HCT116 (cell line): ENCODE measurements at regions of chr11 and their contacts with region 1.

Region 1: DNA sequence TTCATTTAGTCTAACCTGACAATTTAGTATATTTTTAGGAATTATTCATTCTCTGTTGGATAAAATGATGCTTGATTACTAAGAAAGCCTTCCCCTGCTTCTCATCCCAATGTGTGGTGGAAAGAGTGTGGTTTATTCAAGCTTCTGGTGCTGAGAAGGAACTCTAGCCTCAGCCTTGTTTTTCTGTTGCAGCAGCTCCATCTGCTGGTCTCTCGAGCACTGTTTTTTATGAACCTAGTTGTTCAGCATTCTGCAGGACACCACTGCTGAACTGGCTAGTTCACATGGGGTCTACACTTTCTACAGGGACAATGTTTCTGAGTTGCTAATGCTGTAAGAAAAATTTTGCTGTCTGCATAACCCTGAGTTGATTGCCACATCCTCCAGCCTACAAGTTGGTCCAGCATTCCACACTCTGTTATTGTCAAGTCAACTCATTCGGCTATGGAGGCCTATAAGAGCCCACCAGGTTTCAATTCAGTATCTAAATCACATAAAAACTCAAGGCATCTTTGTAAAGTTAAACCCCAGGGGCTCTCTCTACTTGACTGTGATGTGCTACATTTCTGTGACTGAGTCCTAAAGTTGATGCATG is 14.3 kb downstream of the OR2AG2 start:
- DNase-seq: peak; percentile 32
- ATAC-seq: peak; percentile 89
- H3K4me3 ChIP-seq: no peak overlapping the region
- H3K27ac ChIP-seq: no peak overlapping the region
- H3K4me1 ChIP-seq: no peaks in the 10 kb centered on the region
- H3K27me3 ChIP-seq: no peaks in the 10 kb centered on the region
- CTCF ChIP-seq: peak; percentile 51 to 69 (median 61); a peak in 5 of 6 replicates
- POLR2A ChIP-seq: no peak
- RAD21 ChIP-seq: peak; percentile 60

Region 2: GRCh38 chr11:6468712-6469495 is 288.6 kb before region 1 on chr11:
- CTCF ChIA-PET with region 1: no interaction called
- POLR2A ChIA-PET with region 1: no interaction called
- RAD21 ChIA-PET with region 1: no interaction called
- intact Hi-C with region 1: no loop called
- DNase-seq: peak; percentile 60
- ATAC-seq: peak; percentile 77
- H3K4me3 ChIP-seq: no peak overlapping the region
- H3K27ac ChIP-seq: no peak overlapping the region; the same call in 1 of the 2 replicates
- H3K4me1 ChIP-seq: peaks cover 4 to 20% of the 10 kb centered on the region in 2 experiments; a peak in 3 of 4 replicates
- H3K27me3 ChIP-seq: no peaks in the 10 kb centered on the region
- CTCF ChIP-seq: no peak
- POLR2A ChIP-seq: peak; percentile 58
- RAD21 ChIP-seq: no peak

Region 3: DNA sequence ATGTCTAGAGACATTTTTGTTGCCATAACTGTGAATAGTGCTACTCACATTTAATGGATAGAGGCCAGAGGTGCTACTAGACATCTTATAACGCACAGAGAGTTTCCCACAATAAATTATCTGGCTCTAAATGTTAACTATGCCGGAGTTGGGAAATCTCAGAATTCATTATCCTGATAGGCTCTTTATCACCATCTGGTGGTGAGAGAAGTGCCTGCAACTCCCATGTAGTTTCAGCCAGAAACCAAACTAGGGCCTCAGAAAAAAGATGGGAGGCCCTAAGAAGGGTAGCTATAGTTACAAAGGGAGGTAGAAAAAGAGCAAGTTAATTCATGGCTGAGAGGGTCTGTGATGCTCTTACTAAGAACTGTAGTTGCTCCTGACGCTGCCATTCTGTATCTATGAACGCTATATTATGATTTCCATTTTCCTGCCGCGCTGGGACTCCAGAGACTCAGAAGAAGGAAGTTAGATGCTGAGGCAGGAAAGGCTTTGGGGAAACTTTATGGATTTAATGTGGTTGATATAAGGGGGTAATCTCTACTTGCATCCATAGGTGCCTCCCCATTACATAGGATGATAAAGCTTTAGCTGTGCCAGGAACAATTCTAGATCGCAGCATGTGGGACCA is 51.5 kb before region 1 on chr11:
- CTCF ChIA-PET with region 1: interaction called, 9 read pairs
- POLR2A ChIA-PET with region 1: no interaction called
- RAD21 ChIA-PET with region 1: no interaction called
- intact Hi-C with region 1: loop called (anchors 1 kb)
- DNase-seq: no peak
- ATAC-seq: peak; percentile 71
- H3K4me3 ChIP-seq: no peak overlapping the region
- H3K27ac ChIP-seq: no peak overlapping the region
- H3K4me1 ChIP-seq: no peaks in the 10 kb centered on the region
- H3K27me3 ChIP-seq: no peaks in the 10 kb centered on the region
- CTCF ChIP-seq: peak; percentile 80 to 93 (median 90)
- POLR2A ChIP-seq: no peak
- RAD21 ChIP-seq: peak; percentile 76

Region 4: DNA sequence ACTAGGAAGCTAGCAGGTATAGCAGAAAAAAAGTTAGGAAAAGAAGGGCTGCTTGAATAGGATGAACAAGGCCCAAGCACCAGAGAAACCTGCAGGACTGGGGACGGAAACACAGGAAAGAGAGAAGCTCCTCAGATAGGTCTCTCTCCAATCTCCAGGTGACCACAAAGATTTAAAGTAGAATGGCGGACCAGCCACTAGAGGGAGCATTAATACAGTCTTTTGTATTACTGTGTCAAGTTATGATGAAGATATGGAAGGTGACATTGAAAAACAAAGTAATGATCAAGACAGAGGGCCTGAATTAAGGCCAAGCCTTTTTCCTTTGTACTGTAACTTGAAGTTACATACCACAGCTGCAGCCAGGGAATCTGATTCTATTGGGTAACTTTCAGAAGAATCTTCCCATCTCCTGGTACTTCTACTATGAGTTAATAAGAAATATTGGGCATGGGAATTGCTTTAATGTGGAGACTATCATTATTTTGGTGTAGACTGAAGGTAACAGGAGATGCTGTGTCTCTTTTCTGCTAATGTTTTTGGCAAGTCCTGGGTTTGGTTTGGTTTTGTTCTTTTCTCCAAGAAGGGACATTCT is 19.5 kb before region 1 on chr11:
- CTCF ChIA-PET with region 1: interaction called, 22 read pairs
- POLR2A ChIA-PET with region 1: no interaction called
- RAD21 ChIA-PET with region 1: no interaction called
- intact Hi-C with region 1: no loop called
- DNase-seq: peak; percentile 43
- ATAC-seq: peak; percentile 95
- H3K4me3 ChIP-seq: no peak overlapping the region
- H3K27ac ChIP-seq: no peak overlapping the region
- H3K4me1 ChIP-seq: no peaks in the 10 kb centered on the region
- H3K27me3 ChIP-seq: peaks cover 59% of the 10 kb centered on the region
- CTCF ChIP-seq: peak; percentile 41 to 77 (median 58)
- POLR2A ChIP-seq: no peak
- RAD21 ChIP-seq: peak; percentile 55; the same call in 1 of the 2 replicates

Region 5: DNA sequence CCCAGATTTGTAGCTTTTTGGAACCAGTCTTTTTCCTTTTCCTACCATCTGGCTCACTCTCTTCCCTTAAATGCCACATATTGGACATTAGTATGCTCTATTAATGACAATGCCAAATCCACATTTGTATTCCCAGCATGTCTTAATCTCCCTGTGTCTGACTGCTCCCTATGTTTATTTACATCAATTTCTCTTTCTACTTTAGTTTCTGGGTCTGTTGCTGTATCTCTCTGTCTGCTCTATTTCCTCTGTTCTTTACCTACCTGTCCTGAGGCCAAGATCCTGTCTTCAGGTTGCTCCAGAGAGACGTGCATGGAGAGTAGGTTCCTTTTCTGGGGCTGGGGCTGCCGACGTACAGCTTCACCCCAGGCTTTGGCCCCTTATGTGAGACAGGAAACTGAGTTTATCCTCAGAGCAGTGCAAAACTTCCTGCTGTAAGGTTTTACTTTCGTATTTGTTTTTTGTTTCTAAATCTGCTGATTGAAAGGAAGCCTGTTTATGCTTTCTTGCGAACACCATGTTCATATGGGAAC is 11.3 kb before region 1 on chr11:
- CTCF ChIA-PET with region 1: interaction called, 18 read pairs
- POLR2A ChIA-PET with region 1: no interaction called
- RAD21 ChIA-PET with region 1: no interaction called
- intact Hi-C with region 1: no loop called
- DNase-seq: no peak
- ATAC-seq: no peak
- H3K4me3 ChIP-seq: no peak overlapping the region
- H3K27ac ChIP-seq: no peak overlapping the region
- H3K4me1 ChIP-seq: no peaks in the 10 kb centered on the region
- H3K27me3 ChIP-seq: peaks cover 84% of the 10 kb centered on the region
- CTCF ChIP-seq: no peak
- POLR2A ChIP-seq: no peak
- RAD21 ChIP-seq: no peak

Region 6: DNA sequence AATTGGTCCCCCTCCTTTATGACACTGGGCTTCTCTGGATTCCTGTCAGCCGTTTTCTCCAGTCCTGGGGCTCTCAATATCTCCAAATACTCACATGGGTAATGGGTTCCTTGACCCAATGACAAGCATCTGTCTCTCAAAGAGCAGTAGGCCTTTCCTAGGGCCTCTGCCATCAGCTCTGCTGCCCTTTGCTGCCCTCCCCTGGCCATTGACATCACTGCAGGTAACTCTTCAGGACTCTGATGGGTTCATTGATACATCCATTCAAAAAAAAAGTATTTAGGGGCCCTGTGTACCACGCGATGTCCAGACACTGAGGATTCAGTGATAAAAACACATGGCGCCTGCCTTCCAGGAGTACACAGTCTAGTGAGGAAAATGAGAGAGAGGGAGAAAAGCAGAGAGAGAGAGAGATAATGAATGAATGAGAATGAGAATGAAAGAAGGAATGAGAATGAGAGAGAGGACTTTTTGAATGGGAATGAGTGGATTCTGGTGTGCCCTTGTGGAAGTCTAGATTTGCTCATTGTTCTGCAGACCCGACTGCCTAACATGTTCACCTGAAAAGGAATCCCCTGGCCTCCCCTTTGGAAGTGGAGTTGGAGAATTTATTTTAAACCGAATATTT is 685.2 kb after region 1 on chr11:
- CTCF ChIA-PET with region 1: no interaction called
- POLR2A ChIA-PET with region 1: no interaction called
- RAD21 ChIA-PET with region 1: no interaction called
- intact Hi-C with region 1: loop called (anchors 10 kb)
- DNase-seq: peak; percentile 38
- ATAC-seq: peak; percentile 90
- H3K4me3 ChIP-seq: no peak overlapping the region
- H3K27ac ChIP-seq: no peak overlapping the region
- H3K4me1 ChIP-seq: no peaks in the 10 kb centered on the region
- H3K27me3 ChIP-seq: peaks cover 73% of the 10 kb centered on the region
- CTCF ChIP-seq: peak; percentile 53 to 86 (median 85); a peak in 5 of 6 replicates
- POLR2A ChIP-seq: no peak
- RAD21 ChIP-seq: peak; percentile 78